Activated CD8-positive, alpha-beta memory T cell treated with anti-CD3 and anti-CD28 coated beads, Interleukin-2, amount 10 ng/mL, durations not matched to agents 7 days and 5 days (primary cell): ENCODE measurements at regions of chr17 and their contacts with region 1.

Region 1: GRCh38 chr17:63827002-63827771 is at the starts of genes FTSJ3 and PSMC5:
- DNase-seq: peak; percentile 97
- ATAC-seq: peak; percentile 91
- H3K4me3 Mint-ChIP-seq: peak within 1 kb of the TSS; percentile 99
- H3K27ac Mint-ChIP-seq: peak within 1 kb of the TSS; percentile 97
- H3K4me1 Mint-ChIP-seq: peaks cover 79% of the 10 kb centered on the region
- H3K27me3 Mint-ChIP-seq: no peaks in the 10 kb centered on the region
- total RNA-seq, gene FTSJ3: 58.9 to 71.7 TPM
- total RNA-seq, gene PSMC5: 157 to 195 TPM

Region 2: GRCh38 chr17:63842540-63843386 is 15.6 kb after region 1 on chr17 and contains the start of gene SMARCD2:
- CTCF ChIA-PET with region 1: interaction called, 28 read pairs
- DNase-seq: peak; percentile 99
- ATAC-seq: peak; percentile 91
- H3K4me3 Mint-ChIP-seq: peak within 1 kb of the TSS; percentile 95
- H3K27ac Mint-ChIP-seq: peak within 1 kb of the TSS; percentile 94
- H3K4me1 Mint-ChIP-seq: peaks cover 33% of the 10 kb centered on the region
- H3K27me3 Mint-ChIP-seq: no peaks in the 10 kb centered on the region
- total RNA-seq, gene SMARCD2: 137 to 151 TPM